Right ventricle myocardium inferior (tissue), 1 donor: ENCODE measurements at regions of chr10 and their contacts with region 1.

Region 1: DNA sequence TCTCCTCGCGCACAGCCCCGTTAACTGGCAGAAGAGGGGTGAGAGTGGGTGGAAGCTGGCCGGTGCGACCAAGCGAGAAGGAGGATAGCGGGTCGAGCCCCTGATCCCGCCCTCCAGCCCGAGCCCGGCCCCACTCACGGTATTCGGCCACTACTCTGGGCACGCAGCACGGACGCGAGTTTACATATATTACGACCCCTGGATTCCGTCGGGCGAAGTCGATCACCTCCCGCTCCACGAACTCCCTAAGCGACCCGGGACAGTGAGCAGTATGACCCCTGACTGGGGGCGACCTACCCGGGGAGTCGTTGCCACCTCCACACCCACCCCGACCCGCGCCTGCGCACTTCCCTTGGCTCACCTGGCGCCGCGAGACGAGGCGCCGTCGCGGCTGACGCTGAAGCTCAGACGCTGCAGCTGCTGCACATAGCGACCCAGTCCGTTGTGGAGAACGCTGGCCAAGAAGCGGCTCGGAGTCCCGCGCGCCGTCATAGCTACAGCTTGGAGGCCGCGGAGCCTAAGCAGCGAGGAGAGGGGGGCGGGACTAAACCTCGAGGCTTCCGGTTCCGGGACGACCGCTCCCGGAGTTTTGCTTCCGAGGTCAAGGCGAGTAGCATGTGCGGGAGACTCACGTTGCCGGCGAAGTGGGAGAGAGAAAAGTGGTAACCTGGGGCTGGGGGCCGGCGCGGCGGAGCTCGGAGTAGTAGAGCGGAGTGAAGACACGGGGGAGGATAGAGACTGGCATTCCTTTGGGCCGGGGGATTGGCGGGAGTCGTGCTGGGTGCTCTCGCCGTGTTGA is at the starts of genes MRPL43 and TWNK:
- DNase-seq: peak; percentile 93
- ATAC-seq: peak; percentile 82
- total RNA-seq, gene MRPL43: 58.3 TPM
- total RNA-seq, gene TWNK: 6.6 TPM

Region 2: DNA sequence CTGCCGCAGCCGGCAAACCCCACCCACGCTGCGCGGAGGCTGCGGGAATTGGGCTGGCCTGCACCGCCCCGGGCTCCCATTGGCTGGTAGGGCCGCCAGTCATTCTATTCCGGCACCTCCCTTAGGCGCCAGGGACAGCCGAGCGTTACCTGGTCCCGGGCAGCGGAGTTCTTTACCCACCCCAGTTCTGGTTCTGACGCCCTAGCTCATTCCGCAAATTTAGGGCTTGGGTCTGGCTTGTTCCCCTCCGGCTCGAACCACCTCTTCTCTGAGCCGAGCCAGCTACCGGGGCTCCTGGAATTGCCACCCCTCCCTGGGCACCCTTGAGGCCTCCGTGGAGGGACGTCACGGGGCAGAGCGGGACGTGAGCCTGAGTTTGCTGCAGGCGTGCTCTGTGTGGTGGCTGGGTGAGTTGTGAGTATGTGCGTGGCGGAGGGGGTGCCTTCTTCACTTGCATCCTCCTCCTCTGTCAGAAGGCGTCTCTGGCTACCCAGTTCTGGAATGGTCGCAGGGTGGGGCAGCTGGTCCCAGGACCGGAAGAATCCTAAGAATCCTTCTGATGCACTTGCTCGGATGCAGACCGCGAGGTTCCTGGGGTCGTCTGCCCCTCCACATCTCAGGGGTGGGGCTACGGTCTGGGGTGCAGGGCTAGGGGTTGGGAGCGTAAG is 44.1 kb after region 1 on chr10 and contains the starts of genes PDZD7 and SFXN3:
- intact Hi-C with region 1: loop called (anchors 5 kb)
- DNase-seq: peak; percentile 97
- ATAC-seq: peak; percentile 92
- total RNA-seq, gene PDZD7: 0.22 TPM
- total RNA-seq, gene SFXN3: 14.1 TPM

Region 3: DNA sequence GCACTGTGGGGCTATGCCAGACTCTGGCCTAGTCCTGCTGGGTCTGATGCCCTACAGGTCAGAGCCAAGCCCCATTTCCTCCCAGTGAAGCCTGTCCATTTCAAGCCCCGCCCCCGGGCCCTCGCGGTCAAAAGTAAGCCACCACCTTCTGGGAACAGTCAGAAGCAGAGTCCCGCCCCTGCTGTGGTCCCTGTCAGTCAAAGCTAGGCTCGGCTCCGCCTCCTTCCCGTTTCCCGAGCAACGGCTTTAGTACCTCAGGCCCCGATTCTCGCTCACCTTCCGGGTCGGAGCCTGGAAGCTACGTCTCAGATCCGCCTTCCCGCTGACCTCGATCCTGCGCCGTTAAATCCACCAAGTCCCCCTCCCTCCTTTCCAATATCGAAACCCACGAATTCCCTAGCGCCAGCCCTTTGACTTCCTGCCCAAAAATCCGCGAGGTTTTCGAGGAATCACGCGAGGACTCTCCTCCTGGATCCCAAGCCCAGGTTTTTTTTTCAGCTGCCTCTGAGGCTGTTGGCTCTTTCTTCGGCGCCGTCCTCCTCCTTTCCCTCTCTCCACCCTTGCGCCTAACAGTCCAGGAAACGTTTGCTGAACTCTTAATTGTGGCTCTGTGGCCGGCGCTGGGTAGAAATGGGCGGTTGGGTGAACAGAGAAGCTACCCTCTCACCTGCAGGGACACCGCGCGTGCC is 55.7 kb after region 1 on chr10:
- intact Hi-C with region 1: no loop called
- DNase-seq: peak; percentile 98
- ATAC-seq: peak; percentile 94